ENCODE measurements at regions of chr2 and their contacts with region 1.

Region 1: DNA sequence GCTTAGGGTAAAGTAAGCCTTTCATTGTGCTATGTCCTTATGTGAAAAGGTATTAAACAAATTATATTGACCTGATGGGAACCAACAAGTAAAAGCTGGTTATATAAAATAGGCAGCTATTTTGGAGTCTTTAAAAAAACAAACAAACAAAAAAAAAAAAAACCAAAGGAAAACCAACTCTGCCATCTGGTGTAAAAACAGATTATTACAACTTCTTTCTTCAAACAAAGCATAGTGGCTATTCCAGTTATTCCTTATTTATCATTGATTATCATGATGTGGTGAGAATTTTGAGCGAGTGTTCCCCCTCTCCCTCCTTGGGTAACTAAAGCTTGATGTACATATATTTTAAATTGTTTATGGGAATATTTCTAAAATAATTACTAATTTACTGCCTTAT is 122.4 kb upstream of the FHL2 start:
- DNase-seq: peak; percentile 33 to 51 (median 35)
- H3K4me3 ChIP-seq: no peak overlapping the region
- H3K27ac ChIP-seq: no peak overlapping the region
- H3K4me1 ChIP-seq: peaks cover 2 to 27% (median 20%) of the 10 kb centered on the region in 4 experiments
- H3K27me3 ChIP-seq: no peaks in the 10 kb centered on the region

Region 2: DNA sequence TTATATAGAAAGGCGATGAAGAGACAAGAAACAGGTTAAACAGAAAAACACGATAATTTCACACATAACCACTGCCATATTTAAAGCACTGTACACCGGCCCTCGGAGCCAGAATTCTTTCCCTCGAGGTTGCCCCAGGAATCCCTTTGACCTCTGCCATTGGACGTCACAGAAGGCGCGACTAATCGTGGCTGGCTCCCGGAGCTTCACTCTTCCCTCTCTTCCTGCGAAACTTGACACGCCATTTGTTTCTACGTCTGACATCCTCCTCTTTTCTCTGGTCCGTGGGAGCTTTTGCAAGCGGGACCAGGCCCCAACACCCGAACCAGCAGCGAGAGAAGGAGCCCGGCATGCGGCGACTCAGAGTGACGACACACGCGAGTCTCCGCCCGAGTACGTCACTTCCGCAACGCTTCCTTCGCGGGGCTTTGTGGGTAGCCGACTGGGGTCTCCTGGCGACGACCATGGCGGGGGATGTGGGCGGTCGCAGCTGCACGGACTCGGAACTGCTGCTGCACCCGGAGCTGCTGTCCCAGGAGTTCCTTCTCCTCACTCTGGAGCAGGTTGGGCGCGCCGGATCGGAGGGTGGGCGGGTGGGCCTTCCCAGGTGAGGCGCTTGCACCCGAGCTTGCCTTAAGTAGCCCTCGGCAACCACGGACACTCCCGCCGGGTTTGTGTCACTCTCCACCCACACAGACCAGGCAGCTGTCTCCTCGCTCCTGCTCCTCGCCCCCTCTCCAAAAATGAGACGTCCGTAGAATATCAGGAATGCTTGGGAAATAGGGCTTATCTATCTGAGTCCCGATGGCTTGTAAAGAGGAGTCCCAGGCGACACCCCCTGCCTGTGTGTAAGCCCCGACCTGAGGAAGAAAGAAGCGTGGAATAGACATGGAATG is 183.8 kb before region 1 on chr2 and contains the start of gene C2orf49:
- CTCF ChIA-PET with region 1: interaction called, 18 read pairs
- POLR2A ChIA-PET with region 1: no interaction called
- DNase-seq: peak; percentile 93 to 96 (median 95)
- H3K4me3 ChIP-seq: peak within 1 kb of the TSS; percentile 80 to 100 (median 89)
- H3K27ac ChIP-seq: peak within 1 kb of the TSS; percentile 100
- H3K4me1 ChIP-seq: peaks cover 11 to 29% (median 15%) of the 10 kb centered on the region in 4 experiments
- H3K27me3 ChIP-seq: no peaks in the 10 kb centered on the region

Region 3: GRCh38 chr2:105344704-105345345 is 176.4 kb before region 1 on chr2:
- CTCF ChIA-PET with region 1: interaction called, 63 read pairs
- POLR2A ChIA-PET with region 1: no interaction called
- DNase-seq: peak; percentile 64 to 82 (median 74)
- H3K4me3 ChIP-seq: no peak overlapping the region
- H3K27ac ChIP-seq: no peak overlapping the region
- H3K4me1 ChIP-seq: peaks cover 0 to 4% (median 0%) of the 10 kb centered on the region in 4 experiments
- H3K27me3 ChIP-seq: no peaks in the 10 kb centered on the region

Region 4: GRCh38 chr2:105369747-105370690 is 151.2 kb before region 1 on chr2:
- CTCF ChIA-PET with region 1: interaction called, 149 read pairs
- POLR2A ChIA-PET with region 1: interaction called, 4 read pairs
- DNase-seq: peak; percentile 88 to 95 (median 93)
- H3K4me3 ChIP-seq: no peak overlapping the region
- H3K27ac ChIP-seq: no peak overlapping the region
- H3K4me1 ChIP-seq: peaks cover 0 to 6% (median 0%) of the 10 kb centered on the region in 4 experiments
- H3K27me3 ChIP-seq: no peaks in the 10 kb centered on the region

Region 5: GRCh38 chr2:105377819-105378218 is 143.4 kb before region 1 on chr2:
- CTCF ChIA-PET with region 1: interaction called, 53 read pairs
- POLR2A ChIA-PET with region 1: no interaction called
- DNase-seq: no peak
- H3K4me3 ChIP-seq: no peak overlapping the region
- H3K27ac ChIP-seq: no peak overlapping the region
- H3K4me1 ChIP-seq: peaks cover 5 to 48% (median 19%) of the 10 kb centered on the region in 4 experiments
- H3K27me3 ChIP-seq: no peaks in the 10 kb centered on the region

Region 6: DNA sequence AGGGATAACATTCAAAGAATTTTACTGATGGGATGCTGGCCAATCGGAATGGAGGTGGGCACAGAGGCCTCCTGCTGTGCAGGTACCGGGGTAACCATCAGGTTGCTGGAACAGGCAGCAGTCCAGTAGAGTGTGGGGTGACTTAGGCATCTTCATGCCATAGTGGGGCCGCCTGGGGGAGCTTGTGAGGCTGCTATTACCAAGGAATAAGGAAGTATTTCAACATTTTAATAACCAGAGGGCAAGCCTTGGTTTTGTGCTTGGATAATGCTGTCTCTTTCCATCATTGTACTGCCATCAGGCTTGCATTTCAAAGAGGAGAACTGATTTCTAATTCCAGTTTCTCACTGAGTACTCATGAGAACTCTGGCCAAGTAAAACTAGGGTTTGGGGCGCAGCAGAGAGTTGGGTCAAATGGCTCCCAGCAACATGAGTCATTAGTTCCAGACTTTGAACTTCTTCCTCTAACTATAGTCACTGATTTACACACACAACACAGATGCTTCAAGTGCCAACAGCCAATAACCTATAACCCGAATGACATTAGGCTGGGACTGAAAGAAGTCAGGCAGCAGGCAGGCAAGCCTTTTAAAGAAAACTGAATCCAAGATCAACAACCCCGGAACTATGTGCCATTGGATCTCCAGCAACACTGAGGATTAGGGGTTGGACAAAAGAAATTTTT is 66.3 kb before region 1 on chr2:
- CTCF ChIA-PET with region 1: interaction called, 110 read pairs
- POLR2A ChIA-PET with region 1: interaction called, 3 read pairs
- DNase-seq: peak; percentile 65 to 81 (median 79)
- H3K4me3 ChIP-seq: no peak overlapping the region
- H3K27ac ChIP-seq: no peak overlapping the region
- H3K4me1 ChIP-seq: peaks cover 0 to 15% (median 11%) of the 10 kb centered on the region in 4 experiments
- H3K27me3 ChIP-seq: no peaks in the 10 kb centered on the region

Region 7: GRCh38 chr2:105468582-105469042 is 52.6 kb before region 1 on chr2:
- CTCF ChIA-PET with region 1: interaction called, 10 read pairs
- POLR2A ChIA-PET with region 1: no interaction called
- DNase-seq: peak in 1 of 3 donors; percentile 13
- H3K4me3 ChIP-seq: peak overlapping the region in 1 of 7 experiments; percentile 39
- H3K27ac ChIP-seq: peak overlapping the region in 1 of 2 experiments; percentile 41
- H3K4me1 ChIP-seq: peaks cover 9 to 39% (median 38%) of the 10 kb centered on the region in 4 experiments
- H3K27me3 ChIP-seq: no peaks in the 10 kb centered on the region